ENCODE measurements at regions of chr12 and their contacts with region 1.

Region 1: DNA sequence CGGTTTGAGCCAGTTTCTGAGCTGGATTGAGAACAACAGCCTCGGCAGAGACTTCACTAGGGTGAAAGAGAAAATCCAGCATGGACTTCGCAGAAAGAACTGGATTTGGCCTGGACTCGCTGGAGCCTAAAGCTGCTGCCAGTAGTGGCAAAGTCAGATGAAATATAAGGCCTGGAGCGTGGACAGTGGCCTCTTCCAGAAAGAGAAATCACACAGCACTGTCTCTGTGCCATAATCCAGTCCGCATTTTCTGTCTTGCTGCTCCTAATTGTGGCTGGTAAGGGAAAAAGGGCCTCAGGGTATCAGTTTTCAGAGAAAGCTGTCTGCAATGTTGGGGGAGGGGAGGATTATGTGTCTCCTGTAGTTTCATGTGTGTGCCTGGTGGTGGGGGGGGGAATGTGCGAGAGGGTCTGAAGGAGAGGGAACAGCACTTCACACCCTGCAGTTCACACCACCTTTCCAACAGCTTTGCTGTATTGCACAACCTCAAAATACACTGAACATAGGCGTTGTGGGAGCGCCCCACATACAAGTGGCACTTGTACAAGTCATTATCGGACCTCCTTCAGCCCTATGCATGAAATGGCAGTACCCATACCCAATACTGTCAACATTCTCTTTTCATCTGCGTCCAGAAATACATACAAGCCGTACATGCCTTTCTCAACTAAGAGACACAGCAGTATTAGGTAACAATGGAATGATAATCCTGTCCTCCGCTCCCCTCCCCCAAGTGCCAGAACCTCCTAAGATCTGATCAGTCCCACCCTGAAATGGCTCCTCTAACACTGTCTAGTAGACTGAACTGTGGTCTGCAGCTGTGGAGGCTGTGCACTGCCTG is 107.5 kb upstream of the ATF7IP start:
- DNase-seq: peak; percentile 93
- H3K4me3 ChIP-seq: no peak overlapping the region
- H3K27ac ChIP-seq: peak overlapping the region; percentile 82 to 83
- H3K4me1 ChIP-seq: peaks cover 16% of the 10 kb centered on the region
- H3K27me3 ChIP-seq: no peaks in the 10 kb centered on the region
- CTCF ChIP-seq: no peak
- POLR2A ChIP-seq: no peak

Region 2: GRCh38 chr12:14365294-14366208 is 107.6 kb after region 1 on chr12 and contains the start of gene ATF7IP:
- intact Hi-C with region 1: loop called (anchors 2 kb)
- DNase-seq: peak; percentile 97
- H3K4me3 ChIP-seq: peak within 1 kb of the TSS; percentile 66 to 73
- H3K27ac ChIP-seq: peak within 1 kb of the TSS; percentile 96 to 97
- H3K4me1 ChIP-seq: no peaks in the 10 kb centered on the region
- H3K27me3 ChIP-seq: no peaks in the 10 kb centered on the region
- CTCF ChIP-seq: peak in 3 of 4 experiments; percentile 38 to 48 (median 39)
- POLR2A ChIP-seq: peak; percentile 71
- total RNA-seq, gene ATF7IP: 47.1 to 49.9 TPM

Region 3: DNA sequence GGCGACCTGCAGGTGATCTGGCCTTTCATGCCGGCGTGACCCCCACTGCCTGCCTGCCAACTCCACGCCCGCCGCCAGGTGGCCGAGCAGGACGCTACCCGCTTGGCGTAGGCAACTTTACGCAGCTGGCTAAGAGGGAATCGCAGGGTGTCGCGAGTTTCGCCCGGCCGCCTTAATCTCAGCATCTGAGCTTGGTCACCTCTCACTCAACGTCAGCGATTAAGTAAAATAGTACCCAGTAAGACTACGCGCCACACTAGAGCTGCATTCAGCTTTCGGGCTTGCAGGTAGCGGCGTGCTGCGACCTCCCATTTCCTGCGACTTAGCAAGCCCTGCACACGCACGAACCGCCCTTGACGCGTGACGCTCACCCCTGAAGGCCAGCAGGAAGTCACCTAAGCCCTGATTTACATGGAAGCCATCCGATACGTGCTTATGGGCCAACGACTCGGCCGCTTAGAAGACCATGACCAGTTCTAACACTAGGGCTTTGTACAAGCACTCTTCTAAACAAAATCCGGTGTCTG is 512.1 kb after region 1 on chr12:
- intact Hi-C with region 1: loop called (anchors 2 kb)
- DNase-seq: peak; percentile 72
- H3K4me3 ChIP-seq: peak overlapping the region; percentile 73 to 82
- H3K27ac ChIP-seq: peak overlapping the region; percentile 86 to 92
- H3K4me1 ChIP-seq: no peaks in the 10 kb centered on the region
- H3K27me3 ChIP-seq: no peaks in the 10 kb centered on the region
- CTCF ChIP-seq: peak; percentile 72 to 91 (median 81)
- POLR2A ChIP-seq: no peak